ENCODE measurements at regions of chr18 and their contacts with region 1.

Region 1: DNA sequence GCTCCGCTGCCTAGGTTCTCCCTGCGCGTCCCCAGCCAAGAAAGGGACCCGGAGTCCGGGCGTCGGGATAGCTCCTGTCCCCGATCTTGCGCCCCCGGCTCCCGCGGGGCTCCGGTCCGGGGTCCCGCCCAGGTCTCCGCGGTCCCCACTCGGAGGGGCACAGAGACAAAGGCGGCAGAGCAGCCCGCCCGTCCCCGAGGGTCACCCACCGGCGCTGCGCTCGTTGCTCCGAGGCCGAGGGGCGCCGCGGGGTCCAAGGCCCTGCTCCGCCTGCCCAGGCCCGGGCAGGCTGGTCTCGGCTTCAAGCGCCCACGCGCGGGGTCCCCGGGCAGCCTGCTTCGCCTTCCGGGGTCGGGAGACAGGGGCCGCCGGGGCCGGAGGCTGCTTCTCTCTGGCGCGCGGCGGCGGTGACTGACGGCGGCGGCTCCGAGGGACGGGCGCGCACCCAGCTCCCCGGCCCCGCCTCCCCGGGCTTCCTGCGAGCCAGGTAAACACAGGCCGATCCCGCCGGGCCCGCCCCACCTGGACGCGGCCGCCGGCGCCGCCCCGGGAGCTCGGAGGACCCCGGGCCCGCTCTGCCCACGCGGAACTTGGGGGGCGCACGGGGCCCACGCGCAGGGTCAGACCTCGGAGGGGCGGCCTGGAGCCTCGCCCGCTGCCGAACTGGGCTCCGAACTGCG is at the start of gene MBP:
- DNase-seq: peak; percentile 84 to 90
- ATAC-seq: peak; percentile 44
- H3K4me3 ChIP-seq: peak within 1 kb of the TSS; percentile 75 to 79
- H3K27ac ChIP-seq: peak within 1 kb of the TSS in 1 of 2 donors; percentile 60
- H3K4me1 ChIP-seq: peaks cover 0 to 2% of the 10 kb centered on the region in 2 donors
- H3K27me3 ChIP-seq: no peaks in the 10 kb centered on the region
- total RNA-seq, gene MBP: 43.8 to 62.7 TPM

Region 2: DNA sequence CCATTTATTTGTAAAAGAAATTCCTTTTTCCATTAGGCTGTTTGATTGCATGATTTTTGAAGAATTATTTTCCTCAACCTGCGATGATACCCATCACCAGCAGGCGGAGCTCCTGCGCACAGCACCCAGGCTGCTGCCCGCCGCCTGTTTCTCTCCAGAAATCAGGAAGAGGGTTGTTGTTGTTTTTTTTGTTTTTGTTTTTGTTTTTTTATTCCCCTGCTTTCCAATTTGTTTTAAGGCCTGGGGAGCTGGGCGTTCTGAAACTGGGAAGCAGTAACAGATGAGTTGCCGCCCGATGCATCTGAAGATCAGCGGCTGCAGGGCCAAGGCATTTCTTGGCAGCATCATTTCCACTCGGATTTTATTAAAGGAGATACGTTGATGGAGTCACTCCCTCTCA is 132.0 kb before region 1 on chr18:
- intact Hi-C with region 1: loop called (anchors 10 kb)
- DNase-seq: peak; percentile 69 to 87
- ATAC-seq: peak; percentile 79
- H3K4me3 ChIP-seq: peak overlapping the region in 1 of 2 donors; percentile 29
- H3K27ac ChIP-seq: no peak overlapping the region
- H3K4me1 ChIP-seq: no peaks in the 10 kb centered on the region
- H3K27me3 ChIP-seq: no peaks in the 10 kb centered on the region

Region 3: GRCh38 chr18:77067291-77068061 is 65.0 kb before region 1 on chr18:
- intact Hi-C with region 1: loop called (anchors 5 kb)
- DNase-seq: peak; percentile 91
- ATAC-seq: peak; percentile 82
- H3K4me3 ChIP-seq: no peak overlapping the region
- H3K27ac ChIP-seq: peak overlapping the region in 1 of 2 donors; percentile 19
- H3K4me1 ChIP-seq: peaks cover 0 to 3% of the 10 kb centered on the region in 2 donors
- H3K27me3 ChIP-seq: no peaks in the 10 kb centered on the region

Region 4: GRCh38 chr18:77087393-77088141 is 44.9 kb before region 1 on chr18:
- intact Hi-C with region 1: loop called (anchors 5 kb)
- DNase-seq: peak; percentile 72 to 89
- ATAC-seq: peak; percentile 80
- H3K4me3 ChIP-seq: peak overlapping the region; percentile 7 to 28
- H3K27ac ChIP-seq: no peak overlapping the region
- H3K4me1 ChIP-seq: peaks cover 0 to 2% of the 10 kb centered on the region in 2 donors
- H3K27me3 ChIP-seq: no peaks in the 10 kb centered on the region

Region 5: GRCh38 chr18:77207540-77207939 is 75.0 kb after region 1 on chr18:
- intact Hi-C with region 1: loop called in 1 of 2 experiments (anchors 5 kb)
- DNase-seq: peak; percentile 80 to 90
- ATAC-seq: peak; percentile 87
- H3K4me3 ChIP-seq: no peak overlapping the region
- H3K27ac ChIP-seq: peak overlapping the region in 1 of 2 donors; percentile 13
- H3K4me1 ChIP-seq: no peaks in the 10 kb centered on the region
- H3K27me3 ChIP-seq: no peaks in the 10 kb centered on the region

Measured in aorta (tissue), 5 donors.